Endothelial cell of umbilical vein (primary cell): ENCODE measurements at regions of chr7 and their contacts with region 1.

Region 1: DNA sequence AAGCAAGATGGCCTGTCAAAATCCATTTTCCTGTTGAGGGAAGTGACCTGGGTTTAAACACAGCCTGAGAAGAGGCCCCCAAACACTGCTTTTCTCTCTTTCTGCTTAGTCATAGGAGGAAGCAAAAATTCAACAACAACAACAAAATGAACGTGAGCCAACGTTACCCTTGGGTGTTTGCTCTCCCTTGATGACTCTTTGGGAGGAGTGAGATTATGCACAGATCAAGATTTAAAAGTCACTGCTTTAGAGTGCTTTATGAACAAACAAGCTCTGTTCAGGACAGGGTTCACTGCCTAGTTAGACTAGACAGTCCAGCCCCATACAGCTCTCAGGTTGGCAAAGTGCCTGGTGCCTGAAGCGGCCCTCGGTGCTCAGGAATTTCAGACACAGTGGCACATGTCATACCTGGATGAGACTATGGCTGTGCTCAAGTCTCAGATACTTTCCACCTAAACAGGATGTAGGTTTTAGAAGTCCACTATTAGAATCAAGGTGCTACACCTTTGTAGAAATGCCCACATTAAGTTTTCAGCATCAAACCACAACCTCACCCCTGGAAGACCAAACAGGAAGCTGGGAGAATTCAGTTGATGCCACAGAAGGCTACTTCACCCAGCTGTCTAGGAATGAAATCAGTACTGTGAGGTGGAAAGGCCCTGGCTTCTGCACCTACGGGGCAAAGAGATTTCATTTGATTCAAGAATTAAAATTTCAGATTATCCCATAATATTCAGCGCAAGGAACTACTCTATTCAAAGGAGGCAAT is 38.7 kb downstream of the DENND11 start:
- DNase-seq: peak; percentile 90
- H3K4me3 ChIP-seq: no peak overlapping the region
- H3K27ac ChIP-seq: peak overlapping the region; percentile 76
- H3K4me1 ChIP-seq: peaks cover 24% of the 10 kb centered on the region
- H3K27me3 ChIP-seq: no peaks in the 10 kb centered on the region
- CTCF ChIP-seq: no peak
- POLR2A ChIP-seq: peak; percentile 17

Region 2: DNA sequence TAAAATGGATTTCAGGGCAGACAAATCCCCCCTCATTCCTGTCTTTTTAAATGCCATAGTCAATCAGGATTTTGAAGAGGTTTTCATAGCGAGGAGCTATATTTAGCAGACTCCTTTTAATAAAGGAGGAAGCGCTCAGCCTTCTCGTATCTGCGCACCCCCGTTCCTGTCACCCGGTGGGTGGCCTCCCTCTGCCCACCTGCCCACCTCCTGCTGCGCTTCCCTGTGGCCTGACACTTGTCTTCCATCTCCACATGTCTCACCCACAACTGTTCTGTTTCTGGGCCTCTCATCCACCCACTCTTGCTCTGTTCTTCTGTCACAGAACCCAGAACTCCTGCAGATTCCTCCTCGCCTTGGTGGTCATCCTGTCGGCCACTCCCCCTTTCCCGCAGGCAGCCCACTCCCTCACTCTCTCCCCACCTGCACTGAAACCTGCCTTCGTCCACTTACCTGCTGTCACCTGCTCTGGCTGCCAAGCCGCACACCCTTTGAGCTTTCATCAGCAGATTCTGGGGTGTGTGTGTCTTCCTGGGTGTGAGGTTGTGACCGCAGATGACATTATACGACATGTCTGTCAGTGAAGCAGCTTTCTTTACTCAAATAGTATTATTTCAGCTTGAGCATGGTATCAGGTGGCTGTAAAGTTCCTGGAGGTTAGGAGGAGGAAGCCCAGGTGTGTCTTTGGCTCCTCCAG is 275.6 kb before region 1 on chr7:
- CTCF ChIA-PET with region 1: no interaction called
- POLR2A ChIA-PET with region 1: no interaction called
- dilution Hi-C with region 1: no loop called
- intact Hi-C with region 1: no loop called
- DNase-seq: no peak
- H3K4me3 ChIP-seq: no peak overlapping the region
- H3K27ac ChIP-seq: no peak overlapping the region
- H3K4me1 ChIP-seq: no peaks in the 10 kb centered on the region
- H3K27me3 ChIP-seq: no peaks in the 10 kb centered on the region
- CTCF ChIP-seq: no peak
- POLR2A ChIP-seq: no peak

Region 3: DNA sequence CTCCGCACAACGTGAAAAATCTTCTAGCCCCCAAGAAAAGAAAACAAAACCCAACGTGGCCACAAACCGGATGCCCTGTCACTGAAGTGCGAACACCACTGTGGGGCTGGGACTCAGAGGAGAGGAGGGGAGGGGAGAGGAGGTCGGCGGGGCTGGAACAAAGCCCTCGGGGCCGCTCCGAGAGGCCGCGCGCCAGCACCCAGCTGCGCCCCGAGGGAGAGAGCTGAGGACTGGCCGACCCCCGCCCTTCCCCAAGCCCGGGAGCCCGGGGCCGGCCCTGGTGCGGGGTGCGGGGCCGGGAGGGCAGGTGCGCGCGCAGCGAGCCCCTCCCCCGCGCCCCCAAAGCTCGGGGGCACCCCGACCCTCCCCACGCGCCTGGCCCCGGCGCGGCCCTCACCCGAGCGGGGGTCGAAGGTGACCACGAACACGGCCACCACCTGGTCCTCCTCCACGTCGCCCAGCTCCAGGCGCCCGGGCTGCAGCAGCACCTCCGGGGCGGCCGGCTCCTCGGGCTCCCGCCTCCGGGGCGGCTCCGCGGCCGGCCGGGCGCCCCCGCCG is 38.3 kb after region 1 on chr7:
- CTCF ChIA-PET with region 1: no interaction called
- POLR2A ChIA-PET with region 1: no interaction called
- dilution Hi-C with region 1: no loop called
- intact Hi-C with region 1: loop called (anchors 2 kb)
- DNase-seq: peak; percentile 43
- H3K4me3 ChIP-seq: peak overlapping the region; percentile 63 to 92 (median 84)
- H3K27ac ChIP-seq: peak overlapping the region; percentile 16
- H3K4me1 ChIP-seq: peaks cover 10% of the 10 kb centered on the region
- H3K27me3 ChIP-seq: peaks cover 5 to 15% of the 10 kb centered on the region in 2 experiments
- CTCF ChIP-seq: no peak
- POLR2A ChIP-seq: no peak